ENCODE measurements at regions of chr1 and their contacts with region 1.

Region 1: DNA sequence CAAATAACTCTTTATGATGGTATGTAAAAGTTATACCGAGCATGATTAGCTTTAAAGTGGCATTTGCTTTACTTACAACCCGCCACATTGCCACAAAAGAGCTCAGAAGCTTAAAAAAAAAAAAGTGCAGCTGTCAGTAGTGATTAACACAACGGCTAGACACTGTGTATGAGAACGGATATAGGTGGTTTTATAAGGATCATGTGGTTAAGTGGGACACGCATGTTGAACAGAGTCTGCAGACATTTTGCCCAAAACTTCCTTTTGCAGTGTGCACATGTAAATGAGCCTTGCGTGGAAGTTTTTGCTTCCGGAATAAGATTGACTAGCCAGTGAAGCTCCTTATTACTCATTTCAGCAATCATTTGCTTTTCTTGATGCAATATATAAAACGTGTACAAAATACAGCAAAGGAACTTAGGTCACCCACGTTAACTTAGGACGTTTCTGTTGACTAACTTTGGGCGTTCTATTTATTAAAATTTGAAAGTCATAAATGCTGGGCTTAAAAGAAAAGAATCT is 58.7 kb upstream of the RGS1 start:
- DNase-seq: peak; percentile 77
- ATAC-seq: peak; percentile 94
- H3K4me3 Mint-ChIP-seq: peak overlapping the region; percentile 63
- H3K27ac Mint-ChIP-seq: peak overlapping the region; percentile 90
- H3K4me1 Mint-ChIP-seq: peaks cover 61% of the 10 kb centered on the region
- H3K27me3 Mint-ChIP-seq: no peaks in the 10 kb centered on the region
- CTCF ChIP-seq: no peak

Region 2: GRCh38 chr1:192539297-192540092 is 22.7 kb after region 1 on chr1:
- CTCF ChIA-PET with region 1: interaction called, 4 read pairs
- POLR2A ChIA-PET with region 1: no interaction called
- intact Hi-C with region 1: loop called (anchors 2 kb)
- DNase-seq: no peak
- ATAC-seq: peak; percentile 22
- H3K4me3 Mint-ChIP-seq: no peak overlapping the region
- H3K27ac Mint-ChIP-seq: peak overlapping the region; percentile 83
- H3K4me1 Mint-ChIP-seq: peaks cover 50% of the 10 kb centered on the region
- H3K27me3 Mint-ChIP-seq: no peaks in the 10 kb centered on the region
- CTCF ChIP-seq: no peak

Region 3: GRCh38 chr1:192545896-192546521 is 29.2 kb after region 1 on chr1:
- CTCF ChIA-PET with region 1: interaction called, 13 read pairs
- POLR2A ChIA-PET with region 1: interaction called, 7 read pairs
- intact Hi-C with region 1: loop called (anchors 5 kb)
- DNase-seq: no peak
- ATAC-seq: peak; percentile 34
- H3K4me3 Mint-ChIP-seq: no peak overlapping the region
- H3K27ac Mint-ChIP-seq: peak overlapping the region; percentile 16
- H3K4me1 Mint-ChIP-seq: peaks cover 52% of the 10 kb centered on the region
- H3K27me3 Mint-ChIP-seq: no peaks in the 10 kb centered on the region
- CTCF ChIP-seq: peak; percentile 16

Region 4: GRCh38 chr1:192550922-192551534 is 34.2 kb after region 1 on chr1:
- CTCF ChIA-PET with region 1: interaction called, 13 read pairs
- POLR2A ChIA-PET with region 1: interaction called, 4 read pairs
- intact Hi-C with region 1: loop called (anchors 5 kb)
- DNase-seq: peak; percentile 49
- ATAC-seq: peak; percentile 81
- H3K4me3 Mint-ChIP-seq: peak overlapping the region; percentile 26
- H3K27ac Mint-ChIP-seq: peak overlapping the region; percentile 82
- H3K4me1 Mint-ChIP-seq: peaks cover 45% of the 10 kb centered on the region
- H3K27me3 Mint-ChIP-seq: no peaks in the 10 kb centered on the region
- CTCF ChIP-seq: no peak

Region 5: DNA sequence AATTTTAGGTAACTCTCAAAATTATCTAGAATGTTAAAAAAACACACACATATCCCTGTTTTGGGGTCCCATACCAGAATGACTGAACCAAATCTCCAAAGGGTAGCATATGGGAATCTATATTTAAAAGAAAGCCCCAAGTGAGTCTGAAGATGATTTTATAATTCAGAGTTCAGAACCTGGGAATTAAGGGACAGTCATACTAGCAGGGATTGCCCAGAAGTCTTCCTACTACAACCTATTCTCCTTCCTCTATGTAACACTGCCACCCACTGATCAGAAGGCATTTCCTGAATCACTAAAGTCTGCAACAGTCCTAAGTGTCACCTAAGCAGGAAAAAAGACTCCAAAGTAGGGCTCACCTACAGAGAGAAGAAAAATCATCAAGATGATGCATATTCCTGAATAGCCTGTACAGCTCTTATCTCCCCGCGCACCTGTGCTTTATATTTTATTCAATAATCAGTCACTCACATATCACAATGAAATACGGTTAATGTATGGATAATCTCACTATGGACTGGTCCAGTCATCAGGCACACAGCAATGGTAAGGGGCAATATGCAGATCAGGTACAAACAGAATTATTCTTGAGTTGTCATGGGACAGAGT is 63.6 kb after region 1 on chr1:
- CTCF ChIA-PET with region 1: interaction called, 7 read pairs
- POLR2A ChIA-PET with region 1: interaction called, 4 read pairs
- intact Hi-C with region 1: loop called (anchors 2 kb)
- DNase-seq: no peak
- ATAC-seq: peak; percentile 22
- H3K4me3 Mint-ChIP-seq: peak overlapping the region; percentile 36
- H3K27ac Mint-ChIP-seq: peak overlapping the region; percentile 1
- H3K4me1 Mint-ChIP-seq: peaks cover 30% of the 10 kb centered on the region
- H3K27me3 Mint-ChIP-seq: no peaks in the 10 kb centered on the region
- CTCF ChIP-seq: peak; percentile 47